ENCODE measurements at regions of chr6 and their contacts with region 1.

Region 1: GRCh38 chr6:68458447-68458846 is 176.6 kb upstream of the ADGRB3 start:
- DNase-seq: no peak
- ATAC-seq: no peak
- H3K4me3 ChIP-seq: no peak overlapping the region
- H3K27ac ChIP-seq: no peak overlapping the region
- H3K4me1 ChIP-seq: no peaks in the 10 kb centered on the region
- H3K27me3 ChIP-seq: no peaks in the 10 kb centered on the region
- CTCF ChIP-seq: no peak
- POLR2A ChIP-seq: no peak

Region 2: GRCh38 chr6:68410021-68410420 is 48.4 kb before region 1 on chr6:
- intact Hi-C with region 1: loop called in 1 of 10 experiments (anchors 2 kb)
- DNase-seq: no peak
- ATAC-seq: no peak
- H3K4me3 ChIP-seq: no peak overlapping the region
- H3K27ac ChIP-seq: no peak overlapping the region
- H3K4me1 ChIP-seq: no peaks in the 10 kb centered on the region
- H3K27me3 ChIP-seq: no peaks in the 10 kb centered on the region
- CTCF ChIP-seq: no peak
- POLR2A ChIP-seq: no peak

Region 3: DNA sequence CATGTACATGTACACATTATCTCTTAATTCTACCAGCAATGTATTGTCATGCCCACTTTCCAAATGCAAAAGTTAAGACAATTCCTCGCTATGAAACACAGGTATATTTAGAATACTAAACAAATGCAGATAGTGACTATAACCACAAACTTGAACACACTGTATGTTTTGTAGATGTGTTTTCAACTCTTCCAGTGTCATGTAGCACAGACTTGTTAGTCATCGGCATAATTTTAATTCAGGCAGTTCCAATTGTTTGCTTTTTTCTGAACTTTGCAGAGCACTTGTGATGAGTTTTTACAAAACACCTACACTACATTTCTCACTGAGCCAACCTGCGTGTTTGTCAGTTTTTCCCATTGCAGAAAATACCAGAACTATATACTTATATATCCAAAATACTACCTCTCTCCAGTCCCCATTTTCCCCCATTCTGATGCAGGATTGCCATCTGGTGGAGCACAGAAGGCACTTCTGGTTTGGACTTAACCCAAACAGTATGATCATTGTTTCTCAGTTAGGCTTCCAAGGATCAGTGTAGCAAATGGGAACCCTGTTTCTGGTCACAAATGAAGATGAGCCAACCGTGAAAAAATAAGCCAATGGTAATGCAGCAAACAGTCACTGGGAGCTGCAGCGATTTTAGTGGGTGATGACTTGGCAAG is 320.0 kb after region 1 on chr6:
- intact Hi-C with region 1: no loop called
- DNase-seq: peak in 4 of 5 donors; percentile 10 to 29 (median 24)
- ATAC-seq: peak in 3 of 4 donors; percentile 70 to 84 (median 71)
- H3K4me3 ChIP-seq: no peak overlapping the region
- H3K27ac ChIP-seq: no peak overlapping the region
- H3K4me1 ChIP-seq: peaks cover 0 to 5% (median 0%) of the 10 kb centered on the region in 12 donors
- H3K27me3 ChIP-seq: no peaks in the 10 kb centered on the region
- CTCF ChIP-seq: peak; percentile 44 to 75 (median 56)
- POLR2A ChIP-seq: no peak

Region 4: DNA sequence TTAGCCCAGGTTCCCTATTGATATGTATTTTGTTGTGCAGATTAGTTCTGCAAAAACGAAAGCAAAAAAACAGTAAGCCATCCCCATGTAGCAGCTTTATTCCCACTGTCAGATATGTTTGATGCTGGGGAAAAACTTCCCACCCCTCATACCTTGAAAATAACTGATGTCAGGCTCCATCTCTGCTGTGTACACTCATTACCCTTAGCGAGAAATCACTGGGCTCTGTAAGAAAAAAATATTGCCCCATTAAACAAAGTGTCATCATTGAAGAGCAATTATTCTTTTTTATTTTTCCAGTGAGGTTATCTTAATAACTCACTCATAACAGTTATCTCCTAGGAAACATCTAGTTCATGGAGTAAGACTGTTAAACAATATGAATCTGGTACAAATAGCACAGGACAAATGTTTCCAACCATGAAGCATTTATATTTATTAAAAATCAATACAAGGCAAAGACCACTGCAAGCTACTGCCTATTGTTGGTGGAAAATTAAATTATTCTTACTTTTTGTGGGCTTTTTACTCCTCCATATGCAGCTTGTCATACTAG is 1069.6 kb after region 1 on chr6:
- intact Hi-C with region 1: no loop called
- DNase-seq: no peak
- ATAC-seq: no peak
- H3K4me3 ChIP-seq: no peak overlapping the region
- H3K27ac ChIP-seq: no peak overlapping the region
- H3K4me1 ChIP-seq: no peaks in the 10 kb centered on the region
- H3K27me3 ChIP-seq: no peaks in the 10 kb centered on the region
- CTCF ChIP-seq: no peak
- POLR2A ChIP-seq: no peak

Measured in heart left ventricle (tissue), 16 donors.